Mammary epithelial cell (primary cell): ENCODE measurements at regions of chr2 and their contacts with region 1.

Region 1: GRCh38 chr2:191555092-191555742 is 122.7 kb upstream of the NABP1 start:
- DNase-seq: peak; percentile 80
- H3K4me3 ChIP-seq: peak overlapping the region in 2 of 3 experiments; percentile 35
- H3K27ac ChIP-seq: no peak overlapping the region
- H3K4me1 ChIP-seq: peaks cover 9% of the 10 kb centered on the region
- H3K27me3 ChIP-seq: no peaks in the 10 kb centered on the region
- CTCF ChIP-seq: peak; percentile 64 to 78

Region 2: GRCh38 chr2:191691016-191691735 is 136.0 kb after region 1 on chr2:
- CTCF ChIA-PET with region 1: no interaction called
- dilution Hi-C with region 1: loop called (anchors 5 kb)
- in situ Hi-C with region 1: no loop called
- intact Hi-C with region 1: no loop called
- DNase-seq: peak; percentile 63
- H3K4me3 ChIP-seq: no peak overlapping the region
- H3K27ac ChIP-seq: no peak overlapping the region
- H3K4me1 ChIP-seq: peaks cover 40% of the 10 kb centered on the region
- H3K27me3 ChIP-seq: no peaks in the 10 kb centered on the region
- CTCF ChIP-seq: peak; percentile 81 to 85

Region 3: DNA sequence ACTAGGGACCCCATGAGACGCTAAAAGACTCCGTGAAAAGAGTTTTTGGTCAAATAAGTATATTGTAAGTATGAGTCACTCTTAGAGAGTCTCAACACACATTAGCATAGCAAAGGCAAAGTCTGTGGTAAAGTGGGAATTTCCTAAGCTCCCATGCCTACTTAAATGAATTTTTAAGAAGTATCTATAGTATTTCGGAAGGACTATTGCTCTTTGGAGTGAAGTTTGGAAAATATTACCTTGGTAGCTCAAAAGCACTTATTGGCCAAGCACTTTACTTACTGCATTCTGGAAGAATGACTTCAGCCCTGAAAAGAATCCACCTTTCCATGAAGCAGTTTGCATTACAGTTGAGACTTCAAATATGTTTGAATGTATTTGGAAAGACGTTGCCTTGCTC is 234.6 kb after region 1 on chr2:
- CTCF ChIA-PET with region 1: no interaction called
- dilution Hi-C with region 1: no loop called
- in situ Hi-C with region 1: loop called in 1 of 2 experiments (anchors 10 kb)
- intact Hi-C with region 1: no loop called
- DNase-seq: peak; percentile 26
- H3K4me3 ChIP-seq: no peak overlapping the region
- H3K27ac ChIP-seq: no peak overlapping the region
- H3K4me1 ChIP-seq: no peaks in the 10 kb centered on the region
- H3K27me3 ChIP-seq: no peaks in the 10 kb centered on the region
- CTCF ChIP-seq: no peak

Region 4: DNA sequence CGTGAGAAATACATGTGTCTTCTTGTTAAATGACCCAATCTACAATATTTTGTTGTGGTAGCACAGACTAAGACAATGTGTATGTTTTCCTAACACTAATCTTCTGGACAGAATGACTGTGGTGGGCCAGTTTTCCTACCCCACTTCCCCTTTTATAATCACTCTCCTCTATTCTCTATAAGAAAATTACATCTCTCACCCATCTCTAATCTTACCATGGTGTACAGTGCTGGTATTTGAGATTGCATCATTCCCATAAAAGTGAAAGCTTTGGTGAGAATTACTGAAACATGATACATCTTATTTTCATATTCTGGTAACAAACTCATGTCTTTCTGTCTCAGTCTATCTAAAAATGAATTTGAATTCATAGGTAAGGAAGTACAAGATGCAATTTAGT is 251.2 kb after region 1 on chr2:
- CTCF ChIA-PET with region 1: no interaction called
- dilution Hi-C with region 1: no loop called
- in situ Hi-C with region 1: loop called in 1 of 2 experiments (anchors 10 kb)
- intact Hi-C with region 1: no loop called
- DNase-seq: no peak
- H3K4me3 ChIP-seq: no peak overlapping the region
- H3K27ac ChIP-seq: no peak overlapping the region
- H3K4me1 ChIP-seq: no peaks in the 10 kb centered on the region
- H3K27me3 ChIP-seq: no peaks in the 10 kb centered on the region
- CTCF ChIP-seq: no peak

Region 5: DNA sequence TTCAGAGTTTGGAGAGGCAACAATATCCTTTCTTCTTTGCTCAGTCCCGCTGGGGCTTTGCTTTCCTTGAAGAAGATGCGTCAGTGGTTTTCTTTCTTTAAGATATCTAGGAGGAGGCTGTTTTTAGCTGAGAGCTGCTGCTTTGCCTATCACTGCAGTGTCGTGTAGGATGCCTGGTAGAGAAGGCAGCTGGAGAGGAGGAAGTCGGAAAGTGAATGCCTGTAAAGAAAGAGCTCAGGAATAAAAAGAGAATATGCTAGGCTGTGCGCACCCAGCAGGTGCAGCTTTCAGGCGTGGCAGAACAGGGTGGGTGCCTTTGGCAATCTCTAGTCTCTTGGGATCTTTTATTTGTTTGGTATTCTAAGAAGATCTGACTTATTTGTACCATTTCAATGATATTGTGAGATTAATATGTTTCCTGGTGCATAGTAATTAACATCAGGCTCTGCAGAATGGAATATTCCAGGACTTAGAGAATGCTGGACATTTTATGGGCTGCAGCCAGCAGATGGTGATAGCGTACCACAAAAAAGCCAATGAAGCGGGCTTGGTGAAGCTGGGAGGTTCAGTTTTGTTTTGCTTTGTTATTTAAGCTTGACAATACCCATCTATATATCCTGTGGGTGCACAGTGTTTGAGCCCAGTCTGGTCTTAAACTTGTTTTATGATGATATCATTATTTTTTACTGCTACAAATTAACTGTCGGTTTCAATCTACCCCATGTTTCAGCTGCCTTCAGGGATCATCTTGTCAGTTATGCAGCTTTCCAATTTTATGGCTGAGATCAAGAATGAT is 256.8 kb after region 1 on chr2:
- CTCF ChIA-PET with region 1: no interaction called
- dilution Hi-C with region 1: no loop called
- in situ Hi-C with region 1: loop called in 1 of 2 experiments (anchors 10 kb)
- intact Hi-C with region 1: loop called (anchors 1 kb)
- DNase-seq: peak; percentile 38
- H3K4me3 ChIP-seq: no peak overlapping the region
- H3K27ac ChIP-seq: no peak overlapping the region
- H3K4me1 ChIP-seq: no peaks in the 10 kb centered on the region
- H3K27me3 ChIP-seq: no peaks in the 10 kb centered on the region
- CTCF ChIP-seq: peak; percentile 88 to 91

Region 6: GRCh38 chr2:192151853-192152252 is 596.6 kb after region 1 on chr2:
- CTCF ChIA-PET with region 1: no interaction called
- dilution Hi-C with region 1: loop called (anchors 5 kb)
- in situ Hi-C with region 1: loop called in 1 of 2 experiments (anchors 10 kb)
- intact Hi-C with region 1: no loop called
- DNase-seq: peak; percentile 22
- H3K4me3 ChIP-seq: no peak overlapping the region
- H3K27ac ChIP-seq: no peak overlapping the region
- H3K4me1 ChIP-seq: peaks cover under 1% of the 10 kb centered on the region
- H3K27me3 ChIP-seq: no peaks in the 10 kb centered on the region
- CTCF ChIP-seq: no peak

Region 7: DNA sequence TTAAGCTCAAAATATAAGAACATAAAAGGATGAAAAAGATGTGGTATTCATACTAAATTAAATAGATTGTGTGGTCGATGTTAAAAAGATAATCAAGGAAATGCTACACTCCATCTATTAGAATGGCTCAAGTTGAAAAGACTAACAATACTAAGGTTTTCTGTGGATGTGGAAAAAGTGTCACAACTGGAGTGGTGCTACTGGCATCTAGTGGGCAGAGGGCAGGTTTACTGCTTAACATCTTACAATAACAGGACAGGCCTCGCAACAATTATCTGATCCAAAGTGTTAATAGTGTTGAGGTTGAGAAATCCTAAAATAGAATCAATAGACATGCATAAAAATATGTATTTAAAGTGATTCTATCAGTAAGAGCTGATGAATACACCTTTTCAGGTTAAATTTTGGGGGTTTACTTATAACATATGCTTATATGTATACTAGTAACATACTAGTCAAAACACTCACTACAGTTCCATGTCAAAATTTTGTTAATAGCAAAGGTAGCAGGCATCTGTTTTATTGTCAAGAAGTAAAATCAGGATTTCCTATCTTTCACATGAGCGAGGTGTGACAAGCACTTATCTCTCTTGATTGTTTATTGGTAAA is 731.0 kb after region 1 on chr2:
- CTCF ChIA-PET with region 1: no interaction called
- dilution Hi-C with region 1: no loop called
- in situ Hi-C with region 1: loop called in 1 of 2 experiments (anchors 25 kb)
- intact Hi-C with region 1: loop called (anchors 1 kb)
- DNase-seq: peak; percentile 35
- H3K4me3 ChIP-seq: no peak overlapping the region
- H3K27ac ChIP-seq: no peak overlapping the region
- H3K4me1 ChIP-seq: no peaks in the 10 kb centered on the region
- H3K27me3 ChIP-seq: no peaks in the 10 kb centered on the region
- CTCF ChIP-seq: peak; percentile 59 to 81